MCF 10A (cell line): ENCODE measurements at regions of chr13 and their contacts with region 1.

Region 1: DNA sequence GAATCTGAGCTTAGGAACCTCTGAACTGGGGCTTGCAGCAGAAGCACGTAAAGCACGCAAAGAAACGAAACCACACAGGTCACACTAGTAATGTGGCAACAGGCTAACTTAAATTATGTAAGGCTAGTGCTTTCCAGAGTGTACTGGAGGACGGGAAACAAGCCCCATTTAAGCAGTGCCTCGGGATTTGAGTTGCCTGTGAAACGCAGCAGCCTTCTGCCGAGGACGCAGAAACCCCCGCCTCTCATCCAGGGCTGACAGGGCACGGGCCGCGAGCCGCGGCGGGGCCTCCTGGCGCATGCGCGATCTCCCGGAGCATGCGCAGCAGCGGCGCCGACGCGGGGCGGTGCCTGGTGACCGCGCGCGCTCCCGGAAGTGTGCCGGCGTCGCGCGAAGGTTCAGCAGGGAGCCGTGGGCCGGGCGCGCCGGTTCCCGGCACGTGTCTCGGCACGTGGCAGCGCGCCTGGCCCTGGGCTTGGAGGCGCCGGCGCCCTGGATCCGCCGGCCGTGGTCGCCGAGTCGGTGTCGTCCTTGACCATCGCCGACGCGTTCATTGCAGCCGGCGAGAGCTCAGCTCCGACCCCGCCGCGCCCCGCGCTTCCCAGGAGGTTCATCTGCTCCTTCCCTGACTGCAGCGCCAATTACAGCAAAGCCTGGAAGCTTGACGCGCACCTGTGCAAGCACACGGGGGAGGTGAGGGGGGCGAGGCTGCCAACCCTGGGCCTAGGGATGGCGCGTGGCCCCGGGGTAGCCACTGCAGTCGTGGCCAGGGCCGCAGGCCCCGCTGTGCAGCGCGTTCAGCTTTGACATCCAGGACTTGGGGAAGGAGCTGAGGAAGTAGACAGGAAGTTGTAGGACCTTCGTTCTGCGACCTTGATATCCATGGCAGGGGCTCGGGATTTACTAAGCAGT is at the start of gene GTF3A:
- DNase-seq: peak; percentile 84
- H3K4me3 Mint-ChIP-seq: peak within 1 kb of the TSS; percentile 75
- H3K27ac Mint-ChIP-seq: peak within 1 kb of the TSS; percentile 57
- H3K4me1 Mint-ChIP-seq: peaks cover 29% of the 10 kb centered on the region
- H3K27me3 Mint-ChIP-seq: no peaks in the 10 kb centered on the region
- CTCF ChIP-seq: no peak
- total RNA-seq, gene GTF3A: 124 and 159 TPM in 2 replicates

Region 2: DNA sequence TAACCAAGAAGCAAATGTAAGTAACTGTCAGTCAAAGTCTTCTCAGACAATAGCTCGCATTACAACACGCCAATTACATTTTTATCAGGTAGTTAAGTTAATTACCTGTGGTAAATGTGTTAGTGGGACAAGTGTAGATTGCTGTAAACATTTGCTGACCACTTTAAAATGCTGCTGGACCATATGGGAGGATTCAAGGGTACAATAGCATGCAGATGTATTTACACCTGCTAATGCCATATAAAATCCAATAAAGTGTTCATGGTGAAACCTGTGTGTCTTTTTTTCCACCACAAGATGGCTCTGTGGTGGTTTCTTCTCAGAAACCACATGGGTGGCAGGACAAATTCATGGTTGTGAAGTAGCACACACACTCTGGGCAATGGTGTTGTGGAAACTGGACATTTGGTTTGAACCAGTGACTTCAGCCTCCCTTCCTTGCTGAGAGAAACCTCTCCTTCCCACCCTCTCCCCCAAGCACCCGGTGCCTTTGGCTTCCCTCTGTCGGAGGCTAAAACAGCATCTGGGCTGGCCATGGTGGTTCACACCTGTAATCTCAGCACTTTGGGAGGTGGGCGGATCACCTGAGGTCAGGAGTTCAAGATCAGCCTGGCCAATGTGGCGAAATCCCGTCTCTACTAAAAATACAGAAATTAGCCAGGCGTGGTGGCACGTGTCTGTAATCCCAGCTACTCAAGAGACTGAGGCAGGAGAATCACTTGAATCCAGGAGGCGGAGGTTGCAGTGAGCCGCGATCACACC is 18.1 kb before region 1 on chr13:
- CTCF ChIA-PET with region 1: interaction called, 6 read pairs
- POLR2A ChIA-PET with region 1: interaction called, 20 read pairs
- intact Hi-C with region 1: loop called (anchors 1 kb)
- DNase-seq: peak; percentile 55
- H3K4me3 Mint-ChIP-seq: no peak overlapping the region
- H3K27ac Mint-ChIP-seq: no peak overlapping the region
- H3K4me1 Mint-ChIP-seq: no peaks in the 10 kb centered on the region
- H3K27me3 Mint-ChIP-seq: peaks cover 45% of the 10 kb centered on the region
- CTCF ChIP-seq: peak; percentile 45

Region 3: DNA sequence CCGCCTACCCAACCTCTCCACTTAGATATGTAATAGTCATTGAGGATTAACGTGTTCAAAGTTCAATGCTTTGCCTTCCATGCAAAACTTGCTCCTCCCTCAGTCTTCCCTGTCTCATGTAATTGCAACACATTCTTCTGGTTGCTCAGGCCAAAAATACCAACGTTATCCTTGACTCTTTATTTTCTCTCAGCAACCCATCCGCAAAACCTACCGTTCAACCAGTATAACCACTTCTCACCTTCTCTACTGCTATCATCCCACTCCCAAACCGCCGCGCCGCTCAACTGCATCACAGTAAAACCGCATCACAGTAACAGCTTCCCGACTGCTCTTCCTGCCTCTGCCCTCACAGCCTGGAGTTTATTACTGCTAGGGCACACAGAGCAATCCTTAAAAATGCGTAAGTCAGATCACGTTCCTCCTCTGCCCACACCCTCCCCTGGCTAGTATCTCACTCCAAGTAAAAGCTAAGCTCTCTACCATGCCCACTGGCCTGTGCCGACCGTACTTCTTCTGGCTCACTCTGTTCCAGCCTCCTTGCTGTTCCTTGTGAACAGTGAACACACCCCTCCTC is 17.7 kb after region 1 on chr13:
- CTCF ChIA-PET with region 1: interaction called, 15 read pairs
- POLR2A ChIA-PET with region 1: interaction called, 28 read pairs
- intact Hi-C with region 1: no loop called
- DNase-seq: no peak
- H3K4me3 Mint-ChIP-seq: no peak overlapping the region
- H3K27ac Mint-ChIP-seq: no peak overlapping the region
- H3K4me1 Mint-ChIP-seq: no peaks in the 10 kb centered on the region
- H3K27me3 Mint-ChIP-seq: no peaks in the 10 kb centered on the region
- CTCF ChIP-seq: no peak

Region 4: DNA sequence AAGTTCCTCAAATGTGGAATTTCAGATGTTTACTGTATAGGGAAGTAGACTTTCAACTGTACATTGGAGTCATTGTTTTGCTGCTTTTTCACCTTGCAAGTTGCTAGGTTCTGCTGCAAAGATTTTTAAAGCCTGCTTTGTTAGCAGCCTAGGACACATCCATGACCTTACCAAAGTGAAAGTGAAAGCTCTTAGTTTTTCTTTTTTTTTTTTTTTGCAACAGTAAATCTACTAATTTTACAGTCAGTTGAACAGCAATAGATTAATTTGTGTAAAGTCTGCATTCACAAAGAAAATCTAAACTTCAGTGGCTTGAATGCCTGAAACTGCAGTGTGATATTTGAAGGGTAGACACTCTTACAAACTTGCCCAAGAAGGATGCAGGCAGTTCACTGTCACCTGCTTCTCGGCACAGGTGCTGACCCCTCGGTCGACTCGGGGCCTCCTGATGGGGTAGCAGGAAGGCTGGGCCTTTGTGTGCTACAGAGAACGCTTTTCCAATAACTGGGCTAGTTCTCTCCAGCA is 30.9 kb after region 1 on chr13:
- CTCF ChIA-PET with region 1: no interaction called
- POLR2A ChIA-PET with region 1: interaction called, 220 read pairs
- intact Hi-C with region 1: loop called (anchors 1 kb)
- DNase-seq: no peak
- H3K4me3 Mint-ChIP-seq: peak overlapping the region; percentile 28
- H3K27ac Mint-ChIP-seq: peak overlapping the region; percentile 63
- H3K4me1 Mint-ChIP-seq: peaks cover 8% of the 10 kb centered on the region
- H3K27me3 Mint-ChIP-seq: no peaks in the 10 kb centered on the region
- CTCF ChIP-seq: no peak

Region 5: GRCh38 chr13:27607125-27607524 is 182.6 kb after region 1 on chr13:
- CTCF ChIA-PET with region 1: no interaction called
- POLR2A ChIA-PET with region 1: interaction called, 10 read pairs
- intact Hi-C with region 1: no loop called
- DNase-seq: peak; percentile 65
- H3K4me3 Mint-ChIP-seq: peak overlapping the region; percentile 22
- H3K27ac Mint-ChIP-seq: peak overlapping the region; percentile 78
- H3K4me1 Mint-ChIP-seq: peaks cover 19% of the 10 kb centered on the region
- H3K27me3 Mint-ChIP-seq: no peaks in the 10 kb centered on the region
- CTCF ChIP-seq: no peak